ENCODE measurements at regions of chr6 and their contacts with region 1.

Region 1: DNA sequence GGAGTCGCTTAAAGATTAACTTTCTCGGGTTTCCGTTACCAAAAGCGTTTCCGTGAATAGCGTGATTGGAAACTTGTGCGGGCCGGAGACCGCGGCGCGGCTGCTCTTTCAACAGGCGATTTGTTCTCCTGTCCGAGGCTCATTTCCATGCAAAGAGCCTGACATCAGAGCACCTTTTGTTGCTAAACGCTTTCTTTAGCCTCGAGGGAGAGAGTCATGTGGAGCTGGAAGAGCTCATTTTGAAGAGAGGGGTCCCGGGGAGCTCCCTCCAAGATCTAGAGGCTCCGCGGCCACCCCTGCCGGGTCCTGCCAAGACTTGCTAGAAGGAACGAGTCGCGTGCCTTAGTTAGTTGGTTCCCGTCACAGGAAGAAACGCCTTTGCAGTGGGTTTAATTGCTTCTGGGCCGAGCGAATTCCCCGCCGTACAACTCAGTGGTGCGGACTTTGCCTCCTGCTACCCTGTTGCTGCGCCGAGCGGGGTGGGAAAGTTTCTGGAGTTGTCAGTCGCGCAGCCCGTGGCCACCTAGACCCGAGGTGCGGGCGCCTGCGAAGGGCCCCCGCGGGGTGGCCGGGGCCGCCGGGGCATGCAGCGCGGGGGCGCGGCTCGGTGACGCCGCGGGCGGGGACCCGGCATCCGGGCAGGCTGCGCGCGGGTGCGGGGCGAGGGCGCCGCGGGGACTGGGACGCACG is at the start of gene SASH1:
- DNase-seq: peak; percentile 85
- H3K4me3 ChIP-seq: peak within 1 kb of the TSS; percentile 82 to 95 (median 92)
- H3K27ac ChIP-seq: peak within 1 kb of the TSS; percentile 90
- H3K4me1 ChIP-seq: peaks cover 22% of the 10 kb centered on the region
- H3K27me3 ChIP-seq: no peaks in the 10 kb centered on the region
- CTCF ChIP-seq: no peak
- total RNA-seq, gene SASH1: 14.9 to 17.3 TPM

Region 2: GRCh38 chr6:148177589-148178233 is 164.8 kb before region 1 on chr6:
- CTCF ChIA-PET with region 1: no interaction called
- dilution Hi-C with region 1: no loop called
- in situ Hi-C with region 1: no loop called
- intact Hi-C with region 1: loop called (anchors 5 kb)
- DNase-seq: peak; percentile 35
- H3K4me3 ChIP-seq: no peak overlapping the region
- H3K27ac ChIP-seq: no peak overlapping the region
- H3K4me1 ChIP-seq: no peaks in the 10 kb centered on the region
- H3K27me3 ChIP-seq: no peaks in the 10 kb centered on the region
- CTCF ChIP-seq: peak; percentile 71 to 79

Region 3: DNA sequence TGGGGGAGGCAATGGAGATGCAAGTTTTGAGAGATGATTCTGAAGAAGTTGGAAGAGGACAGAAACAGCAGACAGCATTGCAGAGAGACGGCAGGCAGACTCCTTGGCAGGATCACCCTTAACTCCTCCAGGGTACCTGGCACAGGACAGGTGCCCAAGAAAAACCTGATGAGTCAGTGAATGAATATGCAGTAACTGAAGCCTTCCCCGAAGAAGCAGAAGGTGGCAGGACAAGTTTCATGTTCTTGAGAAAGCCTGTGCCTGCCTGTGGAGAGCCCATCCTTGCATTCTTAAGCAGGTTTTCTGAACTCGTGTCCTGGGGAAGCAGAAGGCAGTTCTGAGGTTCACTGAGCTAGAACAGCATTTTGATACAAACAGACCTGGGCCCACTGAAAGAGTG is 79.5 kb before region 1 on chr6:
- CTCF ChIA-PET with region 1: no interaction called
- dilution Hi-C with region 1: no loop called
- in situ Hi-C with region 1: no loop called
- intact Hi-C with region 1: loop called (anchors 2 kb)
- DNase-seq: peak; percentile 82
- H3K4me3 ChIP-seq: no peak overlapping the region
- H3K27ac ChIP-seq: peak overlapping the region; percentile 30
- H3K4me1 ChIP-seq: peaks cover 24% of the 10 kb centered on the region
- H3K27me3 ChIP-seq: no peaks in the 10 kb centered on the region
- CTCF ChIP-seq: no peak

Region 4: GRCh38 chr6:148379966-148380713 is 37.6 kb after region 1 on chr6:
- CTCF ChIA-PET with region 1: interaction called, 3 read pairs
- dilution Hi-C with region 1: no loop called
- in situ Hi-C with region 1: no loop called
- intact Hi-C with region 1: loop called (anchors 5 kb)
- DNase-seq: no peak
- H3K4me3 ChIP-seq: no peak overlapping the region
- H3K27ac ChIP-seq: no peak overlapping the region
- H3K4me1 ChIP-seq: peaks cover 13% of the 10 kb centered on the region
- H3K27me3 ChIP-seq: no peaks in the 10 kb centered on the region
- CTCF ChIP-seq: no peak

Region 5: GRCh38 chr6:148440877-148441453 is 98.5 kb after region 1 on chr6:
- CTCF ChIA-PET with region 1: no interaction called
- dilution Hi-C with region 1: no loop called
- in situ Hi-C with region 1: no loop called
- intact Hi-C with region 1: loop called (anchors 1 kb)
- DNase-seq: peak; percentile 69
- H3K4me3 ChIP-seq: peak overlapping the region in 1 of 3 experiments; percentile 22
- H3K27ac ChIP-seq: peak overlapping the region; percentile 71
- H3K4me1 ChIP-seq: peaks cover 31% of the 10 kb centered on the region
- H3K27me3 ChIP-seq: no peaks in the 10 kb centered on the region
- CTCF ChIP-seq: no peak

Region 6: GRCh38 chr6:148464319-148465010 is 122.0 kb after region 1 on chr6:
- CTCF ChIA-PET with region 1: no interaction called
- dilution Hi-C with region 1: no loop called
- in situ Hi-C with region 1: loop called in 1 of 2 experiments (anchors 10 kb)
- intact Hi-C with region 1: loop called (anchors 1 kb)
- DNase-seq: peak; percentile 42
- H3K4me3 ChIP-seq: no peak overlapping the region
- H3K27ac ChIP-seq: no peak overlapping the region
- H3K4me1 ChIP-seq: no peaks in the 10 kb centered on the region
- H3K27me3 ChIP-seq: no peaks in the 10 kb centered on the region
- CTCF ChIP-seq: peak; percentile 85 to 97

Region 7: DNA sequence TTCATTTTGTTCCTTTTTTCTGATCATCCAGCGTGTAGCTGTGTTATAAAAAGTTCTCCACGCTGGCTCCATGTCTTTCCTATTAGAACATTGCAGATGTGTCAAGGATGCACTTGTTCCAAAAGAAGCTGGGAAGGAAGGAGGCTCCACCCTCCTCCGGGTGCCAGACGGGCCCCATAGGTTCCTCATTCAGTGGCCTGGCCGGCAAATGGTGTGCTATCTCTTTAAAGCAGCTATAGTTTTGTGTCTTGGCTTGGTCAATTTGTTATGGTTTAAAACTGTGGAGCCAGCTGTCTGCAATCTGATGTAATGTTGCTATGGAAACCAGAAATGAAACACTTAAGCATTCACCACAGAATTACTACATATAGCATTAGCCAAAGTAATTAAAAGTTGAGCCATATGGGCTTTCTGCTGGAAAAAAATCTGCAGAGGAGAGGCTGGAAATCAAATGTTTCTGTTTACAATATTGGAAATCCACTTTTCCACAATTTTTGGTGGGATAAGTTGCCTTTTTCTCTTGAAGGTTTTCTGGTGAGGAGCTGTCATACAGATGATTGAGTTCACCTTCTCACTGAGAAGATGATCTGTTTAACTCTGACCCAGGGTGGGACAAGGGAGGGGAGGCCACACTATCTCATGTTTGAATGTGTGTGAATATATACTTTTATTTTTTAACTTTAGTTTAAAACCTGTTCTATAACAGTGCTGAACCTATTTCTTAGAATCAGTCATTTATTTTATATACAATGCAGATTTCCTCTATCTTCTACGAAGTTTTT is 167.5 kb after region 1 on chr6:
- CTCF ChIA-PET with region 1: no interaction called
- dilution Hi-C with region 1: loop called (anchors 5 kb)
- in situ Hi-C with region 1: no loop called
- intact Hi-C with region 1: no loop called
- DNase-seq: peak; percentile 79
- H3K4me3 ChIP-seq: no peak overlapping the region
- H3K27ac ChIP-seq: peak overlapping the region; percentile 60
- H3K4me1 ChIP-seq: peaks cover 22% of the 10 kb centered on the region
- H3K27me3 ChIP-seq: no peaks in the 10 kb centered on the region
- CTCF ChIP-seq: no peak

Region 8: DNA sequence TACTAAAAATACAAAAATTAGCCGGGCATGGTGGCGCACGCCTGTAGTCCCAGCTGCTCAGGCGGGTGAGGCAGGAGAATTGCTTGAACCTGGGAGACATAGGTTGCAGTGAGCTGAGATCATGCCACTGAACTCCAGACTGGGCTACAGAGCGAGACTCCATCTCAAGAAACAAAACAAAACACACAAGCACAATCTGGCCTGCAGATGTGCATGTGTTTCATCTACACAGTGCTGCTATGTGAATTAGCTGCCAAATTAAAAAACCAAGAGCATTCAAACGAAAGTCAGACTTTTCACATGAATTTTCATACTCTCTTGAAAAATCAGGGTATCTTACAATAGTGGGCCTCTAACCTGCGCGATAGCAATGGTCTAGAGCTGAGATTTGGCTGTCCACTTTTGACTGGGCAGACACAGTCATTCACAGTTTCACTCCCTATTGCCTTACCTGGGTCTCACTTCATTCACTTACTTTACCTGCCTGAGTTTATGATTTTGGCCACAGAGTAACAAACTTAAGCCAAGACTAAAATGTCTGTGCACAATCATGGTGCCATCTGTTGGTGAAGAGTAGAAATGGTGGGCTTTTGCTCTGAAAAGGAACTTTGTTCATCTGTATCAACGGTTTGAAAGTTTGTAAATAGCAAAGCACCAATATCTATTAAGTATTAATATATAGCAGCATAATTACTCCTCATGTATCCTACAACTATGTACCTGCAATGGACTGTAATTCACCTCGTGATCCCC is 265.9 kb after region 1 on chr6:
- CTCF ChIA-PET with region 1: no interaction called
- dilution Hi-C with region 1: no loop called
- in situ Hi-C with region 1: no loop called
- intact Hi-C with region 1: no loop called
- DNase-seq: peak; percentile 30
- H3K4me3 ChIP-seq: no peak overlapping the region
- H3K27ac ChIP-seq: no peak overlapping the region
- H3K4me1 ChIP-seq: no peaks in the 10 kb centered on the region
- H3K27me3 ChIP-seq: peaks cover 2% of the 10 kb centered on the region
- CTCF ChIP-seq: peak; percentile 48 to 53

Region 9: DNA sequence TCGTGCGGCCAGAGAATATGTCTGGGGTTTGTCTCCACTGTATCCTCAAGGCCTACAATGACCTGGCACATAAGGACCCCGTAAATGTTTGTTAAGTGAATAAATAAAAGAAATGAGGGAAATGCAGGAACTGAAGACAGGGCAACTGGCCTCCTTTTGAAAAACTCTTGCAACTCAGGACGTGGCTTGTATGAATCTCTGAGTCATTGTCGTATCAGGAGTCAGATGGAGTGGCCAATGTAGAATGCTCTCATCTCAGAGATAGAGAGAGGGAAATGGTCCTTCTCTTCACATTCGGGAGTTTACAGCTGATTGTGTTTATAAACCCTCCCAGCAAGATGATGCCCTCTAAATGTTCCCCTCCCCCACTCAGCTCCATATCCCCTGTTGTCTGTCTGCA is 461.5 kb after region 1 on chr6:
- CTCF ChIA-PET with region 1: no interaction called
- dilution Hi-C with region 1: no loop called
- in situ Hi-C with region 1: no loop called
- intact Hi-C with region 1: no loop called
- DNase-seq: peak; percentile 16
- H3K4me3 ChIP-seq: no peak overlapping the region
- H3K27ac ChIP-seq: no peak overlapping the region
- H3K4me1 ChIP-seq: peaks cover 10% of the 10 kb centered on the region
- H3K27me3 ChIP-seq: no peaks in the 10 kb centered on the region
- CTCF ChIP-seq: no peak

Measured in mammary epithelial cell (primary cell).